Lower lobe of right lung (tissue), 2 donors: ENCODE measurements at regions of chr4 and their contacts with region 1.

Region 1: DNA sequence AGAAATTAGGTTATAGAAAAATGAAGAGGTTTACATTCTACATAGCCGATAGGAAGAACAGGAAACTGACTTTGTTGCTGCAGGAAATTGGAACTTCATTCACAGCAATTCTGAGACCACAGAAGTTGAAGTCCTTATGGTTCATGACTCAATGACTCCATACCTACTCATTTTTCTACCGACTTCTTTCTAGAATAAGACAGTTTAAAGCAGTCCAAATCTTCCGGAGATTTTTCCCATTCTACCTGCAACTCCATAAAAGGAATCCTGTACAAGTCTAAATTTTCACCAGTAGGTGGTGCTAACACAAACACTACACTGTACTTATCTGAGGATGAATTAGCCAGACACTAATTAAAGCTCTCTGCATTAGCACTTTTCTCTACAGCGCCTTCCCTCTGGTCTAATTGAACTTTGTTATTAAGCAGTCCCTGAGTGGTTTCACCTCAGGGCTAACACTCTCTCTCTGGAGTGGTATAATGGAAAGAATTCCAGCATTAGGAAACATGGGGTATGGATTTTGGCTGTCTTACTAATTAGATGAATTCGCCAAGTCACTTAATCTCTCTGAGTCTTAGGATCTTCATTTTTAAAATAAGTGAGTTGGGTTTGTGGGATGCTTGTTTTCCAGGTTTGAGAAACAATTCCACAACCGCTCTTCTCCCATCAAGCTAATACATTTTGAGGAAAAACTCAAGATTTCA is 167.9 kb downstream of the SMIM20 start:
- DNase-seq: no peak
- ATAC-seq: peak; percentile 68 to 84
- H3K4me3 ChIP-seq: no peak overlapping the region
- H3K27ac ChIP-seq: no peak overlapping the region
- H3K4me1 ChIP-seq: peaks cover 22% of the 10 kb centered on the region
- H3K27me3 ChIP-seq: no peaks in the 10 kb centered on the region
- CTCF ChIP-seq: peak; percentile 74

Region 2: DNA sequence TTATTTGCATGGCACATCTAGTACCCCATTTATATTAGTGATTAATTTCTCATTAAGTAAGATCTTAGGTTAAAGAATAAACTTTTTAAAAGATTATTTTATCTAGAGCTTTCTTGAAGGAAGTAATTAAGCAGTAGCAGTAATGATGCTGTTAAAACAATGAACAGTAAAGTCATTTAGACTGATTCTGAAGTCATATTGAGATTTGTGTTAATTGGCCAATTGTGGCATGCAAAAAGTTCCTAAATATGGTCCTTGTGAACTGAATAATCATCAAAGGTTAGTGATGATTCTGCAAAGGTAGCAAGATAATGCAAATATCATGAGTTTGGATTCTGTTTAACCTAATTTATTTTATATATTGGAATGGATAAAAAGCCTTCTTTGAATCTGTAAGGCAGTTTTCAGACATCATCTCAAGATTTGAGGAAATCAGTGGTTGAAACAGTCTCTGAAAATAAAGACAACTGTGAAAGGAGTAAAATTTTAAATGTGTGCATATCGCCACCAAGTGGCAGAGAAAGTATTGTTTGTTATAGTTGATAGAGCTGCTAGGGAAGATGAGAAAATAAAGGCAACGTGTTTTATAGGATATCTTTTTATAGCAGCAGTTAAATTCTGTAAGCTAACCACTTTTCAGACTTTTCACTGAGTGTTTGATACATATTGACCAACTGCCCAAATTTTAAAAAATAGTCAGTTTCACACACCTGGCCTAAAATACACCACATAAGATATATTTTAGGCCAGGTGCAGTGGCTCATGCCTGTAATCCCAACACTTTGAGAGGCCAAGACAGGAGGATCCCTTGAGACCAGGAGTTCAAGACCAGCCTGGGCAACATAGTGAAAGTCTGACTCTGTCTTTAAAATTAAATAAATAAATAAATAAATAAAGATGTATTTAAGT is 328.7 kb after region 1 on chr4:
- intact Hi-C with region 1: loop called (anchors 10 kb)
- DNase-seq: no peak
- ATAC-seq: peak in 1 of 2 donors; percentile 72
- H3K4me3 ChIP-seq: no peak overlapping the region
- H3K27ac ChIP-seq: no peak overlapping the region
- H3K4me1 ChIP-seq: peaks cover 13% of the 10 kb centered on the region
- H3K27me3 ChIP-seq: no peaks in the 10 kb centered on the region
- CTCF ChIP-seq: peak; percentile 60

Region 3: DNA sequence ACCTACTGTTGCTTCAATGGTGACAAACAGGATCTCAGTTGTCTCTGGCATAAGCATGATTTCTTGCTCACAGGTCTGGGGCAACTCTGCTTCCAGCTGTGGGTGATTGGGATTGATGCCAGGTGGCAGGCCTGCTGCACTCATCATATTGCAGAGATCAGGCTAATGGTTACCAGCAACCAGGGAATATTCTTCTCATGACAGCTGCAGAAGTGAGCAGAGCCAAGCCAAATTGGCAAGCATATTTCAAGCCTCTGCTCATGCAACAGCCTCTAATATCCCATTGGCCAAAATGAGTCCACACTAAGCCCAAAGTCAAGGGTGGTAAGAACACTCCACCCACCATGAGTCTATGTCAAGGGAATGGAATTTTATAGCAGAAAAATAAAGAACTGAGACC is 475.2 kb after region 1 on chr4:
- intact Hi-C with region 1: no loop called
- DNase-seq: no peak
- ATAC-seq: peak; percentile 34 to 35
- H3K4me3 ChIP-seq: no peak overlapping the region
- H3K27ac ChIP-seq: no peak overlapping the region
- H3K4me1 ChIP-seq: no peaks in the 10 kb centered on the region
- H3K27me3 ChIP-seq: no peaks in the 10 kb centered on the region
- CTCF ChIP-seq: no peak